ENCODE measurements at regions of chr21 and their contacts with region 1.

Region 1: DNA sequence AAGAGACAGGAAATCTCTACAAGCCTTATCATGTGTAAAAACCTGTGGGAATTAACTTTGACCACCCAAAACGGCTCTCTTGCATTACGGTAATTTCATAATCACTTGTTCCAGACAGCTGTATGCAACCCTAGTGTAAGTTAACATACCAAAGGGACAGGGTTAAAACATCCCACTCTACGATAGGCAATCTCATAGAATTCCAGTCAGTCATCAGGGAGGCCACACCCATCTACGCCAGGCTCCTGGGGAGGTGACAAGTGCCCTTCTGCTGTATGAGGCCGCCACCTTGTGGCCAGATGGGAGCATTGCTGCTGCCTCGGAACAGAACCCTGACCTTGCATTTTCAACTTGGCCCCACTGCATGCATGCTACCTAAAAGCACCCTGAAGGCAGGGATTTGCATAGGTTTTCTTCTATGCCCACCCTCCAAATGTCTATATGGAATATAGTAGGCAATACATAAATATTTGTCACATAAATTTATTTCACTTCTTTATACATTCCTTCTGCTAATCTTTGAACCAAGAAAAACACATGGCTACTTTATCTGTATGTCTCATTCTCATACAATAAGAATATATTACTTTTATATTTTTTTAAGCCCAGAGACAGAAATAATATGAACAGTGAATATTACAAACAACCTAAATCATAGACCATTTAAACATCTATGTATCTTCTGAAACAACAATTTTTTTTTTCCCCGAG is 12.6 kb downstream of the HSF2BP start:
- DNase-seq: peak; percentile 90
- ATAC-seq: peak; percentile 95
- H3K4me3 Mint-ChIP-seq: peak overlapping the region; percentile 54
- H3K27ac Mint-ChIP-seq: peak overlapping the region; percentile 57
- H3K4me1 Mint-ChIP-seq: peaks cover 24% of the 10 kb centered on the region
- H3K27me3 Mint-ChIP-seq: peaks cover 6% of the 10 kb centered on the region

Region 2: DNA sequence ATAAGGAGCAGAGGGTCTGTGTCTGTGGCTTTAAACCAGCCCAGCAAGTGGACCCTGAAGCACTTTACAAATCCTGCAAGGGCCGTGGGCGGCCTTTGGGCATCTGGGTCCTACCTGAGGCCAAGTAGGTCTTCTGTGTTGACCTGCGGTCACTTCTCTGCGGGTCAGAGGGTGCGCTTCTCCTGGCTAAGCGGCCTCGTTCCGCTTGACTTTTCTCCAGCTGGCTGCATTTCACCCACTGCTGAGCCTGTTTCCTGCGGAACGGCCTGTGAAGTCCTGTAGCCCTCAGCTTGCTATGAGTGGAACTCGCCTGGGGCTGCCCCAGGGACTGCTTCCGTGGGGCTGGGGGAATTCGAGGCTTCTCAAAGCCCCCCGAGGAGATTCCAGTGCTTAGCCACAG is 1089.7 kb before region 1 on chr21:
- CTCF ChIA-PET with region 1: no interaction called
- POLR2A ChIA-PET with region 1: no interaction called
- DNase-seq: no peak
- ATAC-seq: no peak
- H3K4me3 Mint-ChIP-seq: no peak overlapping the region
- H3K27ac Mint-ChIP-seq: no peak overlapping the region
- H3K4me1 Mint-ChIP-seq: no peaks in the 10 kb centered on the region
- H3K27me3 Mint-ChIP-seq: no peaks in the 10 kb centered on the region

Region 3: GRCh38 chr21:43611598-43612369 is 34.9 kb before region 1 on chr21:
- CTCF ChIA-PET with region 1: interaction called, 11 read pairs
- POLR2A ChIA-PET with region 1: no interaction called
- DNase-seq: peak; percentile 37
- ATAC-seq: no peak
- H3K4me3 Mint-ChIP-seq: no peak overlapping the region
- H3K27ac Mint-ChIP-seq: no peak overlapping the region
- H3K4me1 Mint-ChIP-seq: peaks cover 10% of the 10 kb centered on the region
- H3K27me3 Mint-ChIP-seq: peaks cover 5% of the 10 kb centered on the region

Region 4: GRCh38 chr21:43657355-43658085 is 10.8 kb after region 1 on chr21:
- CTCF ChIA-PET with region 1: interaction called, 12 read pairs
- POLR2A ChIA-PET with region 1: interaction called, 3 read pairs
- DNase-seq: no peak
- ATAC-seq: no peak
- H3K4me3 Mint-ChIP-seq: peak overlapping the region; percentile 25
- H3K27ac Mint-ChIP-seq: no peak overlapping the region
- H3K4me1 Mint-ChIP-seq: peaks cover 39% of the 10 kb centered on the region
- H3K27me3 Mint-ChIP-seq: no peaks in the 10 kb centered on the region